ENCODE measurements at regions of chr1 and their contacts with region 1.

Region 1: GRCh38 chr1:228308628-228309363 is 97.8 kb downstream of the TRIM11 start:
- DNase-seq: no peak
- H3K4me3 ChIP-seq: no peak overlapping the region
- H3K27ac ChIP-seq: no peak overlapping the region
- H3K4me1 ChIP-seq: no peaks in the 10 kb centered on the region
- H3K27me3 ChIP-seq: no peaks in the 10 kb centered on the region; a peak in 1 of 7 replicates
- CTCF ChIP-seq: peak; percentile 24 to 55 (median 55); a peak in 3 of 4 replicates
- EP300 ChIP-seq: no peak
- POLR2A ChIP-seq: no peak
- RAD21 ChIP-seq: peak; percentile 18 to 34; a peak in 2 of 4 replicates

Region 2: GRCh38 chr1:228321435-228321834 is 12.6 kb after region 1 on chr1:
- CTCF ChIA-PET with region 1: interaction called, 19 read pairs
- POLR2A ChIA-PET with region 1: interaction called, 3 read pairs
- DNase-seq: no peak
- H3K4me3 ChIP-seq: no peak overlapping the region
- H3K27ac ChIP-seq: no peak overlapping the region
- H3K4me1 ChIP-seq: no peaks in the 10 kb centered on the region
- H3K27me3 ChIP-seq: no peaks in the 10 kb centered on the region; a peak in 1 of 7 replicates
- CTCF ChIP-seq: no peak
- EP300 ChIP-seq: no peak
- POLR2A ChIP-seq: no peak
- RAD21 ChIP-seq: no peak

Measured in H1 (cell line).